ENCODE measurements at regions of chr1 and their contacts with region 1.

Region 1: GRCh38 chr1:205321164-205321958 is at the start of gene NUAK2:
- DNase-seq: peak; percentile 91 to 97 (median 93)
- H3K4me3 ChIP-seq: peak within 1 kb of the TSS; percentile 49 to 95 (median 85)
- H3K27ac ChIP-seq: peak within 1 kb of the TSS in 53 of 59 donors; percentile 18 to 93 (median 78)
- H3K27me3 ChIP-seq: peaks cover 0 to 4% (median 0%) of the 10 kb centered on the region in 45 donors
- CTCF ChIP-seq: peak in 49 of 56 donors; percentile 8 to 61 (median 39)
- total RNA-seq, gene NUAK2: 0.55 to 5.2 (median 1.7) TPM

Region 2: DNA sequence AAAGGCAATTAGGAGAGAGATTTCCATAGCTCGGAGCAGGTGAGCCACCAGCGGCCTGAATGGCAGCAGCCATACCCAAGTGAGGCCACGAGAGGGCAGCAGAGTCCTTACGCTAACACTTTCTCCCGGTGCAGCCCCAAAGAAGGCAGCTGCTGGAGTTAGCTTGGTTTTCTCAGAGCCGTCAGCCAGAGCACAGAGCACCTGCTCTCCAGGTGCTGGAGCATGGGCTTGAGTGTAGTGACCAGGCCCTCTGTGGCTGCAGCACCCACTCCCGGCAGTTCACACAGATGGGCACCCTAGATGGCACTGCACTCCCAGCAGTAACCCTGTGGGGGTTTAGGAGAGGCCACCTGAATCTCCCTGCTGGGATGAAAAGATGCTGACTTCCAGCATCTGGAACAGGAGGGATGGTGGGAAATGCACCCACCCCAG is 47.8 kb before region 1 on chr1:
- intact Hi-C with region 1: loop called (anchors 1 to 2 kb)
- DNase-seq: peak; percentile 87 to 94 (median 90)
- H3K4me3 ChIP-seq: no peak overlapping the region
- H3K27ac ChIP-seq: peak overlapping the region; percentile 10 to 100 (median 92)
- H3K27me3 ChIP-seq: no peaks in the 10 kb centered on the region
- CTCF ChIP-seq: peak; percentile 94 to 100 (median 99)

Region 3: DNA sequence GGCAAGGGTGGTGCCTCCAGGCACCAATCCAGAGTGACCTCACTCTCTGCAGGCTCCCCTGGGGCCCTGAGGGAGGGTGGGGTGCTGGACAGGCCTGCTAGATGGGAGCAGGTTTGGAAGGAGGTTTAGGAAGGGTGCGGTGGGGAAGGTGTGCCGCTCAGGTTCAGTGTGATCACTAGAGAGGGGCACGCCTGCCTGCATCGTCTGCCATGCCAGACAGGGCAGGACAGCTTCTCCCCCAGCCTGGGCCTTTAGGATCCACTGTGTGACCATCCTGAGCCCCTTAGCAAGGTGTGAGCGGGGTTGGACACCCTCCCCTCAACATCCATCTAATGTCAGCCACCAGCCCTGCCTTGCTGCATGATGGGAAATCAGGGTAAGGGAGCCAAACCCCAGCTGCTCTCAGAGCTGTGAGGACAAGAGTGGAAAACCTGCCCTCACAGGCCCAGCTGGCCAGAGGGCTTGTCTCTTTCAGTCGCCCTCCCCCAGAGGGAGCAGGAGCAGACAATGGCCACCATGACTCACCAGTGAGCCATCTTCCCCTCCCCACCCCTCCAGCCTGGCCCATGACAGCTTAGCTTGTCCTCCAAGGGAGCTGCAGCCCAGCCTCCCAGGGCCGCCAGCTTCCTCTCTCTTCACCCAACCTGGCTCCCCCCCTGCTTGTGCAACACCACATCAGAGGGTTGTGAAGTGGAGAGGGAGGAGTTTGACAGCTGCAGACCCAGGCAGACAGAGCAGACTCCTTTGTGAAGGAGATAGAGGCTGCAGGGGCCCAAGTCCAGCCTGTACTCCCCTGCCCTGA is 36.8 kb before region 1 on chr1:
- intact Hi-C with region 1: loop called (anchors 2 to 5 kb)
- DNase-seq: peak; percentile 34 to 95 (median 91)
- H3K4me3 ChIP-seq: no peak overlapping the region
- H3K27ac ChIP-seq: peak overlapping the region in 58 of 59 donors; percentile 55 to 98 (median 88)
- H3K27me3 ChIP-seq: no peaks in the 10 kb centered on the region
- CTCF ChIP-seq: peak in 29 of 56 donors; percentile 1 to 52 (median 26)

Measured in dorsolateral prefrontal cortex (tissue), 120 donors.